Heart left ventricle (tissue), 16 donors: ENCODE measurements at regions of chr2 and their contacts with region 1.

Region 1: GRCh38 chr2:45935791-45936622 is 284.5 kb downstream of the PRKCE start:
- DNase-seq: peak; percentile 85 to 97 (median 91)
- ATAC-seq: peak; percentile 77 to 94 (median 94)
- H3K4me3 ChIP-seq: no peak overlapping the region
- H3K27ac ChIP-seq: peak overlapping the region in 8 of 12 donors; percentile 22 to 74 (median 42)
- H3K4me1 ChIP-seq: peaks cover 2 to 32% (median 13%) of the 10 kb centered on the region in 12 donors
- H3K27me3 ChIP-seq: no peaks in the 10 kb centered on the region
- CTCF ChIP-seq: peak; percentile 62 to 90 (median 80)
- POLR2A ChIP-seq: peak in 1 of 2 donors; percentile 15

Region 2: DNA sequence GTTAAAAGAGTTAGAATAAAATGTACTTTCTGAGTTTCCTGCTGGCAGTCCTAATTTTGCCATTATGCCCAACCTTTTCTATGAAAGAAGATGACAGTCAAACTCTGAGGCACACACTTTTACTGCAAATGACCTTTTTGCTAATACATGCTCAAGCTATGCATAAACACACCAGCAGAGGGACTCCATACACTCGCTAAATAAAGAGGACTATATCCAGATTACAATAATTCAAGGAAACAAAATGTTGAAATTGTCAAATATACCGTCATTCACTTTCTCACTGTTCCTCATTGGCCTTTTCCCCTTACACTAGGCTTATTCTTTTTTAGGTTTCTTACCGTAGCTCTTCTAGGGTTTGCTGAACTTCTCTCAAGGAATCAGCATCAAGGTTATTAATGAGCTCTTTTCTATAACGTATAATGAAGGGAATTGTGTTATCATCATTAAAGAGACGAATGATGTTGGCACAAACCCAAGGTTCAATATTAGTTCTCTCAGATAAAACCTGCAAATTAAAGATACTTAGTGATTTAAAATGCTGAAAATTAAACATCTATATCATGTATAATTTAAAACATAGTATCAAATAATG is 350.6 kb before region 1 on chr2:
- intact Hi-C with region 1: loop called in 1 of 10 experiments (anchors 5 kb)
- DNase-seq: no peak
- ATAC-seq: peak in 3 of 4 donors; percentile 58 to 70 (median 65)
- H3K4me3 ChIP-seq: peak overlapping the region in 1 of 12 donors; percentile 13
- H3K27ac ChIP-seq: no peak overlapping the region
- H3K4me1 ChIP-seq: peaks cover 0 to 23% (median 0%) of the 10 kb centered on the region in 12 donors
- H3K27me3 ChIP-seq: no peaks in the 10 kb centered on the region
- CTCF ChIP-seq: peak; percentile 43 to 76 (median 66)
- POLR2A ChIP-seq: no peak

Region 3: DNA sequence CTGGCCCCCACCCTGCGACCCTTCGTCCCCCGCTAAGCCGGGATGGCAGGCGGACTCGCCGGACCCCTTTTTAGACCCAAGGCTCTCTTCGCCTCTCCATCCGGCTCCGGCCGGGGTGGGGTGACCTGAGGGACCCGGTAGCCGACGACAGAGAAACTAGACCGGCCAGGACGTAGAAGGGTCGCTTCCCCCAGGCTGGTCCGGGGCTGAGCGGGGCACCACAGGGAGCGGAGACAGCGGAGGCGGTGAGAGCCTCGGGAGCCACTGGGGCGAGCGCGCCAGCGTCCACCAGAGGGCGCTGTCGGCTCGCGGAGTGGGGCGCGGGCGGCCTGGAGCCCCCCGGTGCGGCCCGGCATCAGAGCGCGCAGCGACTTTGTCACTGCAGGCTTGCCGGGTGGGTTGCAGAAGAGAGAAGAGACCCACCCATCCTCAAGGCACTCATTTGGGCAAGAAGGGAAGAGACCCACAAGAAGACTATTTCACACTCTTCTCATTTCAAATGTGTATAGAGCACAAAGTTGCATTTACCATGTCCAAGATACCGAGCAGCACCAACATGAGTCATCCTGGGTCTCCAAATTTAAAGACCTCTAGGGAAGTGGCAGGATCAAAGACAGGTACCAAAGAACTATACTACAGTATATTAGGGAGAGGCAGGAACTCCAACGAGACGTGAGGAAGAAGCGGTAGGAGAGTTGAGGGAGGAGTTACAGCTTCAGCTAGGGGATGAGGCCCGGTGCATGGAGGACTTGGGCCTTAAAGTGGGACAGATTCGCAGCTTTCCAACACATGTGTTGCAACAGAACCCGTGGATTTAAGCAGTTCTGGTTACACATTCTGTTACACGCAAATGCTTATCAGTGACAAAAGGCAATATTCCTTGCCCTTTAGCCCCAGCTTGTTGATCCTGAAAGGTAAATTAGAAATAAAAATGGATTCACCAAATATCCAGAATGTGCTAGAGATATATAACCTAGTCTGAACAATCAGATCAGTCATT is 292.2 kb before region 1 on chr2:
- intact Hi-C with region 1: loop called (anchors 1 to 2 kb)
- DNase-seq: peak; percentile 64 to 87 (median 71)
- ATAC-seq: peak; percentile 64 to 97 (median 95)
- H3K4me3 ChIP-seq: peak overlapping the region; percentile 32 to 65 (median 56)
- H3K27ac ChIP-seq: peak overlapping the region in 1 of 12 donors; percentile 46
- H3K4me1 ChIP-seq: peaks cover 0 to 20% (median 11%) of the 10 kb centered on the region in 12 donors
- H3K27me3 ChIP-seq: peaks cover 0 to 8% (median 0%) of the 10 kb centered on the region in 9 donors
- CTCF ChIP-seq: peak; percentile 93 to 99 (median 98)
- POLR2A ChIP-seq: no peak

Region 4: GRCh38 chr2:45771261-45771660 is 164.7 kb before region 1 on chr2:
- intact Hi-C with region 1: loop called in 8 of 10 experiments (anchors 5 to 10 kb)
- DNase-seq: peak; percentile 76 to 87 (median 81)
- ATAC-seq: peak; percentile 93 to 94 (median 94)
- H3K4me3 ChIP-seq: peak overlapping the region in 8 of 12 donors; percentile 20 to 43 (median 34)
- H3K27ac ChIP-seq: peak overlapping the region; percentile 55 to 81 (median 76)
- H3K4me1 ChIP-seq: peaks cover 0 to 73% (median 31%) of the 10 kb centered on the region in 12 donors
- H3K27me3 ChIP-seq: no peaks in the 10 kb centered on the region
- CTCF ChIP-seq: peak in 2 of 12 donors; percentile 10 to 12
- POLR2A ChIP-seq: no peak

Region 5: GRCh38 chr2:45778720-45779171 is 157.3 kb before region 1 on chr2:
- intact Hi-C with region 1: loop called (anchors 2 to 10 kb)
- DNase-seq: peak in 4 of 5 donors; percentile 44 to 72 (median 65)
- ATAC-seq: peak; percentile 50 to 64 (median 58)
- H3K4me3 ChIP-seq: no peak overlapping the region
- H3K27ac ChIP-seq: no peak overlapping the region
- H3K4me1 ChIP-seq: peaks cover 0 to 48% (median 24%) of the 10 kb centered on the region in 12 donors
- H3K27me3 ChIP-seq: no peaks in the 10 kb centered on the region
- CTCF ChIP-seq: peak; percentile 69 to 88 (median 80)
- POLR2A ChIP-seq: no peak

Region 6: DNA sequence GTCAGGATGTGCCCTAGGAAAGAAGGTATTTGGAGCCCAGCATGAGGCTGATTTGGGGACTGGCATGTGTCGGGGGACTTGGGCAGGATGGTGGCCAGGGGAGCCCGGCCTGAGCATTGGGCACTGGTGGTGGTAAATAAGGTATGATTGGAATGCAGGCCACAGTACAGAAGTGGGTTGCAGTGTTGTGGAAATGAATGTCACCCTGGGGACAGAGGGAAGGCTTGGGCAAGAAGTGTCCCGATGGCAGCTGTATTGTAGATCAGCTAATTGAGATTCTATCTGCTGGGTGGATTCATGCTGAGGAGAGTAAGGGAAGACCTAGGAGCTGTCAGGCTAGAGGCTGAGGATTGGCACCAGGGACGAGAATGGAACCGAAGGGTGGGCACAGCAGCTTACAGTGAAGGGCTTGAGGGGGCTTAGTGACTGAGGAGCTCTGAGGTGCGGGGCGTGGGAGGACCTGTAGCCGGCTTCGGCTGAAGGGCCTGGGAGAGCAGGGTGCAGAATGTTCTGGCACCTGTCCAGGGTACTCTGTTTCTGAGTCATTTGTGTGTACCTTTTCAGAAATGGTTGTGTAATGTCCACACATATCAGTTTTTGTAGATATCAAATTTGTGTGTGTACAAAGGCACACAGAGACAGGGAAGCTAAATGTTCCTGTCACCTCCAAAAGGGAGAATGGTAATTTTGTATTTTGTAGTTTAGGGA is 114.3 kb before region 1 on chr2:
- intact Hi-C with region 1: loop called in 1 of 10 experiments (anchors 5 kb)
- DNase-seq: peak in 4 of 5 donors; percentile 32 to 80 (median 44)
- ATAC-seq: peak; percentile 8 to 58 (median 46)
- H3K4me3 ChIP-seq: no peak overlapping the region
- H3K27ac ChIP-seq: peak overlapping the region in 10 of 12 donors; percentile 8 to 79 (median 56)
- H3K4me1 ChIP-seq: peaks cover 3 to 70% (median 32%) of the 10 kb centered on the region in 12 donors
- H3K27me3 ChIP-seq: no peaks in the 10 kb centered on the region
- CTCF ChIP-seq: no peak
- POLR2A ChIP-seq: no peak

Region 7: DNA sequence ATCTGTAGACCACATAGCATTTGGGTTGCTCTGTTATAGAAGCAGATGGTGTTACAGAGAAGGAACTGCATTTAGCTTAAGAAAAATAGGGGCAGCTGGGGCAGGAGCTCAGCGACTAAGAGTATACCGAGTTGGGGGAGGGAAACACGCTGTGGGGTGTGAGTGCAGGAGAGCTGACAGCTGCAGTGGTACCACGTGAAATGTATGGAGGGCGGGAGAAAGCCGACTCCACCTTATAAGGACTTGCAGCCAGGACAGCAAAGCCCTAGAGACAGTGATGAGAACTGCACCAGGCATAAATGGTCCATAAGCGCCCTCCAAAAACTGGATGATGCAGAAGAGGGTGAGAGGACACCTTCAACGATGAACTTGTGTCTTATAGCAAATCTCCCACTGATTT is 47.0 kb before region 1 on chr2:
- intact Hi-C with region 1: loop called in 3 of 10 experiments (anchors 5 to 10 kb)
- DNase-seq: peak in 3 of 5 donors; percentile 29 to 72 (median 66)
- ATAC-seq: peak; percentile 28 to 78 (median 72)
- H3K4me3 ChIP-seq: no peak overlapping the region
- H3K27ac ChIP-seq: peak overlapping the region in 3 of 12 donors; percentile 4 to 82 (median 19)
- H3K4me1 ChIP-seq: peaks cover 4 to 93% (median 55%) of the 10 kb centered on the region in 12 donors
- H3K27me3 ChIP-seq: no peaks in the 10 kb centered on the region
- CTCF ChIP-seq: peak in 3 of 12 donors; percentile 16 to 19 (median 17)
- POLR2A ChIP-seq: no peak